Aorta (tissue), 5 donors: ENCODE measurements at regions of chr11 and their contacts with region 1.

Region 1: GRCh38 chr11:63023841-63024648 is 8.4 kb upstream of the SLC22A8 start:
- DNase-seq: peak; percentile 93 to 95
- ATAC-seq: peak; percentile 93
- H3K4me3 ChIP-seq: no peak overlapping the region
- H3K27ac ChIP-seq: no peak overlapping the region
- H3K4me1 ChIP-seq: no peaks in the 10 kb centered on the region
- H3K27me3 ChIP-seq: no peaks in the 10 kb centered on the region

Region 2: GRCh38 chr11:61567286-61568061 is 1456.6 kb before region 1 on chr11:
- intact Hi-C with region 1: no loop called
- DNase-seq: peak; percentile 79 to 91
- ATAC-seq: peak; percentile 83
- H3K4me3 ChIP-seq: no peak overlapping the region
- H3K27ac ChIP-seq: no peak overlapping the region
- H3K4me1 ChIP-seq: no peaks in the 10 kb centered on the region
- H3K27me3 ChIP-seq: peaks cover 0 to 2% of the 10 kb centered on the region in 2 donors

Region 3: DNA sequence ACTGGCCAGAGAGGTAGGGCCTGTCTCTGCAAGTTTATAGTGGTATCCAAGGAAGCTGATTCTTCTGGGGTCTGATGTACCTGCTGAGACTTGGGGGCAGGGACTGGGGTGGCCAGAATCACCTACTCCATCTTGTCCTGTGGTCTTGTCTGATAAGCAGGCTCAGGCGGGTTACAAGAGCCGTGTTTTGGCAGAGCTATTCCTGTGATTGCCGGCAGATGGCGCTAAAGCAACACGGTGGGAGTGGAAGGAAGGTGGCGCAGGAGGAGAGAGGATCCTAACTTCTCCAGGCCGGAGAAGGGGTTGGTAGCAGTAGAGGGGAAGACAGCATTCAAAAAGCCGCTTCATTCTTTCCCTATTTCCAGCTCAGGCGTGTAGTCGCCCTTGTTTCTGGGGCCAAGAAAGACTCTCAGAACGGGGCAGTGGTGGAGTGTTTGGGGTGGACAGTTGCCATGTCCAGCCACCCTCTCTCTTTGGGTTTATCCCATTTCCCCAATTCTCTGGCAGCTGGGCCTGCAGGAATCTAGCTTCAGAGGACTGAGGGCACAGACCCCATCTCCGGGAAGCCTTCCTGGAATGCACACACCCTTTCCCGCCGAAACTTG is 118.0 kb before region 1 on chr11:
- intact Hi-C with region 1: loop called (anchors 1 to 2 kb)
- DNase-seq: peak; percentile 81 to 94
- ATAC-seq: peak; percentile 88
- H3K4me3 ChIP-seq: no peak overlapping the region
- H3K27ac ChIP-seq: no peak overlapping the region
- H3K4me1 ChIP-seq: no peaks in the 10 kb centered on the region
- H3K27me3 ChIP-seq: no peaks in the 10 kb centered on the region

Region 4: GRCh38 chr11:64675450-64676260 is 1651.6 kb after region 1 on chr11:
- intact Hi-C with region 1: no loop called
- DNase-seq: peak; percentile 93
- ATAC-seq: peak; percentile 96
- H3K4me3 ChIP-seq: no peak overlapping the region
- H3K27ac ChIP-seq: peak overlapping the region in 1 of 2 donors; percentile 90
- H3K4me1 ChIP-seq: peaks cover 0 to 2% of the 10 kb centered on the region in 2 donors
- H3K27me3 ChIP-seq: no peaks in the 10 kb centered on the region